Naive thymus-derived CD4-positive, alpha-beta T cell (primary cell): ENCODE measurements at regions of chr22 and their contacts with region 1.

Region 1: GRCh38 chr22:40177738-40178416 is at the start of gene TNRC6B:
- DNase-seq: peak in 8 of 9 donors; percentile 68 to 95 (median 90)
- ATAC-seq: peak; percentile 98
- H3K4me3 ChIP-seq: peak within 1 kb of the TSS; percentile 72
- H3K4me3 Mint-ChIP-seq: peak within 1 kb of the TSS; percentile 80 to 97 (median 90)
- H3K27ac ChIP-seq: peak within 1 kb of the TSS; percentile 71
- H3K27ac Mint-ChIP-seq: peak within 1 kb of the TSS; percentile 85 to 94 (median 91)
- H3K4me1 ChIP-seq: peaks cover 35 to 44% of the 10 kb centered on the region in 2 donors
- H3K4me1 Mint-ChIP-seq: peaks cover 38 to 77% (median 63%) of the 10 kb centered on the region in 7 donors
- H3K27me3 ChIP-seq: no peaks in the 10 kb centered on the region
- H3K27me3 Mint-ChIP-seq: no peaks in the 10 kb centered on the region
- total RNA-seq, gene TNRC6B: 67.4 to 165 (median 146) TPM

Region 2: DNA sequence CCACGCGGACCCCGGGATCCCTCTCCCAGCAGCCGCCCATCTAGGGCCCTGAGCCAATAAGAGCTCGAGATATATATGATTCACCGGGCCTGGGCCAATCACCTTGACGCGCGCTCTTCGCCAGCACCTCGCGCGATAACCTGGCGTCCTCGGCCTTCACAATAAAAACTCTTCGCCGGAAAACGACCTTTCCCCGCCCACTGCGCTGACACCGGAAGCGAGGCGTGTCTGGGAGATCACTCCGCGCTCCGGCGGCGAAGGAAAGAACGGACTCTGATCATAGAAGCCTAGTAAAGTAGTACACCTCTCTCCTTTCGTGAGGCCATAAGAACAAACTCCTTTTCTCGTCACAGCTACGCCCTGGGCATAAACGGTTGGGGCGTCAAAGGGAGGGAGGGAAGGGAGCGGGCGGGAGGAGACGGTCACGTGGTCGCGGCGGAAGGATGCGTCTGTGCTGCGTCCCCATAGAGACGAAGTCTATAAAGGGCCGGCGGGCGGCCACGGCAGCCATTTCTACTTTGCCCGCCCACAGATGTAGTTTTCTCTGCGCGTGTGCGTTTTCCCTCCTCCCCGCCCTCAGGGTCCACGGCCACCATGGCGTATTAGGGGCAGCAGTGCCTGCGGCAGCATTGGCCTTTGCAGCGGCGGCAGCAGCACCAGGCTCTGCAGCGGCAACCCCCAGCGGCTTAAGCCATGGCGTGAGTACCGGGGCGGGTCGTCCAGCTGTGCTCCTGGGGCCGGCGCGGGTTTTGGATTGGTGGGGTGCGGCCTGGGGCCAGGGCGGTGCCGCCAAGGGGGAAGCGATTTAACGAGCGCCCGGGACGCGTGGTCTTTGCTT is 657.6 kb before region 1 on chr22 and contains the start of gene ATF4:
- CTCF ChIA-PET with region 1: no interaction called
- POLR2A ChIA-PET with region 1: interaction called, 3 read pairs
- intact Hi-C with region 1: loop called in 1 of 2 experiments (anchors 1 kb)
- DNase-seq: peak; percentile 88 to 98 (median 96)
- ATAC-seq: peak; percentile 92
- H3K4me3 ChIP-seq: peak within 1 kb of the TSS; percentile 96
- H3K4me3 Mint-ChIP-seq: peak within 1 kb of the TSS; percentile 83 to 99 (median 96)
- H3K27ac ChIP-seq: peak within 1 kb of the TSS; percentile 84
- H3K27ac Mint-ChIP-seq: peak within 1 kb of the TSS; percentile 94 to 100 (median 97)
- H3K4me1 ChIP-seq: peaks cover 27 to 39% of the 10 kb centered on the region in 2 donors
- H3K4me1 Mint-ChIP-seq: peaks cover 29 to 61% (median 48%) of the 10 kb centered on the region in 7 donors
- H3K27me3 ChIP-seq: no peaks in the 10 kb centered on the region
- H3K27me3 Mint-ChIP-seq: peaks cover 0 to 4% (median 0%) of the 10 kb centered on the region in 5 donors
- total RNA-seq, gene ATF4: 235 to 293 (median 244) TPM

Region 3: DNA sequence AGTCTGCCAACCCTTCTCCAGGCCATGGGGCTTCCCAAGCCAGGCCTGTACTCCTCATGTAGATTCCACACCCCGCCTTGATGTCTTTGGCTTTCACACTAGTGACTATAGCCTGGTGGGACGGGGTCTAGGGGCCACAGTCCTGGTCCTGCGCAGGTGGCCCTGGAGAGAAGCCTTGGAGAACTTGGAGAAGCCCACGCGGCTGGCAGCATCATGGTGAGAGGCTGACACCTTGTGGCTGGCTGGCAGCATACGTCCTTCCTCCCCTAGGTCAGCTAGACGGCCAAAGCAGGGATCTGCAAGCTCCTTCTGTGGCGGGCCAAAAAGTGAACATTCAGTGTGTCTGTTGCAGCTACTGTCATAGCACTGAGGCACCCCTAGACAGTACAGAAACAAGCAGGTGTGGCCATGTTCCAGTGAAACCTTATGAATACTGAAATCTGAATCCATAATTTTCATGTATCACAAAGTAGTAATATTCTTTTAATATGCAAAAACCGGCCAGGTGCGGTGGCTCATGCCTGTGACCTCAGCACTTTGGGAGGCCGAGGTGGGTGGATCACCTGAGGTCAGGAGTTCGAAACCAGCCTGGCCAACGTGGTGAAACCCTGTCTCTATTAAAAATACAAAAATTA is 141.2 kb before region 1 on chr22:
- CTCF ChIA-PET with region 1: no interaction called
- POLR2A ChIA-PET with region 1: no interaction called
- intact Hi-C with region 1: no loop called
- DNase-seq: peak in 7 of 9 donors; percentile 26 to 56 (median 48)
- ATAC-seq: peak; percentile 81
- H3K4me3 ChIP-seq: no peak overlapping the region
- H3K4me3 Mint-ChIP-seq: no peak overlapping the region
- H3K27ac ChIP-seq: no peak overlapping the region
- H3K27ac Mint-ChIP-seq: no peak overlapping the region
- H3K4me1 ChIP-seq: no peaks in the 10 kb centered on the region
- H3K4me1 Mint-ChIP-seq: peaks cover 0 to 7% (median 6%) of the 10 kb centered on the region in 7 donors
- H3K27me3 ChIP-seq: peaks cover 0 to 3% of the 10 kb centered on the region in 2 donors
- H3K27me3 Mint-ChIP-seq: peaks cover 3 to 25% (median 15%) of the 10 kb centered on the region in 5 donors

Region 4: DNA sequence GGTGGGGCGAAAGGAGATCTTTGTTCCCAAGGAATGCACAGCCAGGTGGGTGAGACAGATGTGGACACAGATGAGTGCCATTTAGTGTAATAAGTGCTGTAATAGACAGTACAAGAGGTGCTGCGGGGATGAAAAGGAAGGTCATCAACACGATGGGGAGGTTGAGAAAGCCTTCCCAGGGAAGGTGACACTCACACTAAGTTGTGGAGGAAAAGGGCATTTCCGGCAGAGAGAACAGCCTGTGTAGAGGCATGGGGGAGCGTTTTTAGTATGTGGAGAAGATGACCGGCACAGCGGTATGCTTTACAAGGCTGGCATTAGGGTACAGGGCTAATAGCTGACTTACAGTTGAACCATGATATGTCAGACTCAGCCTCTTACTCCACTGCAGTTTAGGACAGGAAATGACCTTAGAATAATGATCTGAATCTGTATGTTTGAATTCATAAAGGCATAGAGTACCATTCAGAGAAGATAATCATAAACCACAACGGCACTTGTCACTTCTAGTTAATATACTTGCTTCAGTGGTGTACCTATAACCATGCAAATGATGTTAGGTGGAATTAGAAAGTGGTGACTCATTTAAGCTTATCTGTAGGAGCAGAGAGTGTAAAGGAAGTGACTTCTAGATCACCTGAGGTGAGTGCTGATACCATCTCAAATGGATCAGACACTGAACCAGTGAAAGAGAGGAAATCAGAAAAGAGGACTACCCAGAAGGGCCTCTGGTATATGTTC is 122.6 kb before region 1 on chr22:
- CTCF ChIA-PET with region 1: no interaction called
- POLR2A ChIA-PET with region 1: interaction called, 3 read pairs
- intact Hi-C with region 1: loop called in 1 of 2 experiments (anchors 5 kb)
- DNase-seq: peak in 7 of 9 donors; percentile 15 to 70 (median 39)
- ATAC-seq: peak; percentile 95
- H3K4me3 ChIP-seq: peak overlapping the region; percentile 21
- H3K4me3 Mint-ChIP-seq: peak overlapping the region; percentile 60 to 80 (median 70)
- H3K27ac ChIP-seq: peak overlapping the region; percentile 65
- H3K27ac Mint-ChIP-seq: peak overlapping the region; percentile 50 to 91 (median 84)
- H3K4me1 ChIP-seq: peaks cover 53 to 69% of the 10 kb centered on the region in 2 donors
- H3K4me1 Mint-ChIP-seq: peaks cover 63 to 95% (median 83%) of the 10 kb centered on the region in 7 donors
- H3K27me3 ChIP-seq: no peaks in the 10 kb centered on the region
- H3K27me3 Mint-ChIP-seq: no peaks in the 10 kb centered on the region

Region 5: DNA sequence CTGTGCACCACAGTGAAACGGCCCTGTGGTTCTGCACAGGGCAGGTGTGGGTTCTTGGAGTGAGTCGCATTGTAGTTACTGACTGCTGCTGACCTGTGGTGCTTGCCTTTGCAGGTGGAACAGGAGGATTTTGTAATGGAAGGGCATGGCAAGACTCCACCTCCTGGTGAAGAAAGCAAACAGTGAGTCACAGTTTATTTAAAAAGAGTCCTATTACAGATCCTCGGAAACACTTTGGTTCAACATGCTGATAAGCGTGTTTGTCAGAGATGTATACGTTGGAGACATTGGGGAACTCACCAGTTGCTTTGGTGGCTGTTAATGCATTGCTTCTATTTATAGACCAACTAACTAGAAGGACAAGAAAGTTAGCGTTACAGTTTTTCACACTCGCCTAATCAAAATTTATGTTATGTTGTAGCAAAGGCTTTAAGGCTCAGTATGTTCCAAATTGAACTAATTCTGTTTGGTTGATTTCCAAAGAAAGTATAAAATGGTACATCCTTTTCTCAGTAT is 21.8 kb before region 1 on chr22:
- CTCF ChIA-PET with region 1: no interaction called
- POLR2A ChIA-PET with region 1: interaction called, 4 read pairs
- intact Hi-C with region 1: loop called in 1 of 2 experiments (anchors 1 kb)
- DNase-seq: peak in 1 of 9 donors; percentile 15
- ATAC-seq: peak; percentile 32
- H3K4me3 ChIP-seq: no peak overlapping the region
- H3K4me3 Mint-ChIP-seq: no peak overlapping the region
- H3K27ac ChIP-seq: no peak overlapping the region
- H3K27ac Mint-ChIP-seq: peak overlapping the region in 6 of 9 donors; percentile 41 to 71 (median 50)
- H3K4me1 ChIP-seq: no peaks in the 10 kb centered on the region
- H3K4me1 Mint-ChIP-seq: peaks cover under 1 to 37% (median 21%) of the 10 kb centered on the region in 7 donors
- H3K27me3 ChIP-seq: no peaks in the 10 kb centered on the region
- H3K27me3 Mint-ChIP-seq: no peaks in the 10 kb centered on the region

Region 6: GRCh38 chr22:40243891-40244290 is 66.0 kb after region 1 on chr22:
- CTCF ChIA-PET with region 1: interaction called, 3 read pairs
- POLR2A ChIA-PET with region 1: interaction called, 3 read pairs
- intact Hi-C with region 1: loop called (anchors 2 kb)
- DNase-seq: peak in 5 of 9 donors; percentile 23 to 45 (median 37)
- ATAC-seq: no peak
- H3K4me3 ChIP-seq: no peak overlapping the region
- H3K4me3 Mint-ChIP-seq: peak overlapping the region; percentile 52 to 81 (median 64)
- H3K27ac ChIP-seq: no peak overlapping the region
- H3K27ac Mint-ChIP-seq: peak overlapping the region; percentile 40 to 91 (median 81)
- H3K4me1 ChIP-seq: peaks cover 61 to 71% of the 10 kb centered on the region in 2 donors
- H3K4me1 Mint-ChIP-seq: peaks cover 64 to 96% (median 89%) of the 10 kb centered on the region in 7 donors
- H3K27me3 ChIP-seq: no peaks in the 10 kb centered on the region
- H3K27me3 Mint-ChIP-seq: no peaks in the 10 kb centered on the region

Region 7: DNA sequence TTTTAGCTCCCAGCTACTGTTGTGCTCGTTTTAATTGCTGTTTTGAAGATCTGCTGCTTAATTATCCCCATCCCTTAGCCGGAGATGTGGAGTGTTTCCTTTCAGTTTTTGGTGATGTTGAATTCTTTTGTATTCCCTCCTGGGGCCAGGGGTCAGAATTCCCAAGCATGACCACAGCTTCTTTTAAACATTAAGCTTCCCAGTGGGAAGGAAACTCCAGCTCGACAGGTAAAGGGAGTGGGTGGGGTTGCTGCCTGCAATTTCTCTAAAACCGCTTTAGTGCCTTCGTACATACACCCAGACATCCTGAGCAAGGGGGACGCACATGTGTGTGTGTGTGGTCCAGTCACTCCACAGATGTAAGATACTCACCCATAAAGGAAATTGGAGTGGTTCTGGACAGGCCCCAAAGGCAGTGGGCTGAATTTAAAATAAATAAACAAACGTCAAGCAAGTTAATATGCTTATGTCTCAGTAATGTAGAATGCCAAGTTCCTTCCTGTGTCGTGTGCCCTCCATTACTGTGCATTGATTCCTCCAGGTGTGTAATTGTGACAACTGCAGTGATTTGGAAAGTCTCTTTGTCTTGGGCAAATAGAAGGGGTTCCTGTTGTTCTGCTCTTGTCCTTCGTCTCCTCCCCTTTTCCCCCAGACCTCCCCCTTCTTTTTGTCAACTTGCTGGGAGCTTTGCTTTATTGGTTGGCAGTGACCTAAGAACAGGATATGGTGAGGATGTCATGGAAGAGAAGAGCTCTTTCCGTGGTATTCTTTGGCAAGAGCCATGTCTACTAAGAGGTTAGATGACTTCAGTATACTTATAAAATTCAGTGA is 149.2 kb after region 1 on chr22:
- CTCF ChIA-PET with region 1: no interaction called
- POLR2A ChIA-PET with region 1: interaction called, 5 read pairs
- intact Hi-C with region 1: loop called (anchors 1 kb)
- DNase-seq: peak in 6 of 9 donors; percentile 37 to 79 (median 53)
- ATAC-seq: no peak
- H3K4me3 ChIP-seq: no peak overlapping the region
- H3K4me3 Mint-ChIP-seq: peak overlapping the region; percentile 31 to 78 (median 58)
- H3K27ac ChIP-seq: peak overlapping the region; percentile 59
- H3K27ac Mint-ChIP-seq: peak overlapping the region; percentile 53 to 99 (median 95)
- H3K4me1 ChIP-seq: peaks cover 62 to 96% of the 10 kb centered on the region in 2 donors
- H3K4me1 Mint-ChIP-seq: peaks cover 51 to 100% (median 97%) of the 10 kb centered on the region in 7 donors
- H3K27me3 ChIP-seq: no peaks in the 10 kb centered on the region
- H3K27me3 Mint-ChIP-seq: no peaks in the 10 kb centered on the region